Posterior cingulate gyrus (tissue), 11 donors: ENCODE measurements at regions of chr1 and their contacts with region 1.

Region 1: DNA sequence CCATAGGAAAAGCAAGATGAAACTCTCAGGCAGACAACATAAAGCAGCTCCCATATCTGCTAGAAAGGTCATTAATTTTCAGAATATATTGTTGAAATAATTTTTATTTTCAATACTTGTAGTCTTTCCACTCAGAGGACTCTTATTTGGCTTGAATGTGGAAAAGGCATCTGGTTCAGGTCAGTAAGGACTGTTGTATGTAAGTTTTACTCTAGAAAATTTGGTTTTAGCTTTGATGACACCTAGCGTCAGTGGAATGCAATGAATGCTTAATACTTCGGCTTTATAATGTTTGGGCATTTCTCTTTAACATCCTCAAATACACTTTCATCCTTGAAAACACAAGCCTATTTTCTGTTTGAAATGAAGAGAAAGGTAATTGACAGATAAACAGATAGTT is 63.3 kb downstream of the LRRC40 start:
- DNase-seq: no peak

Region 2: DNA sequence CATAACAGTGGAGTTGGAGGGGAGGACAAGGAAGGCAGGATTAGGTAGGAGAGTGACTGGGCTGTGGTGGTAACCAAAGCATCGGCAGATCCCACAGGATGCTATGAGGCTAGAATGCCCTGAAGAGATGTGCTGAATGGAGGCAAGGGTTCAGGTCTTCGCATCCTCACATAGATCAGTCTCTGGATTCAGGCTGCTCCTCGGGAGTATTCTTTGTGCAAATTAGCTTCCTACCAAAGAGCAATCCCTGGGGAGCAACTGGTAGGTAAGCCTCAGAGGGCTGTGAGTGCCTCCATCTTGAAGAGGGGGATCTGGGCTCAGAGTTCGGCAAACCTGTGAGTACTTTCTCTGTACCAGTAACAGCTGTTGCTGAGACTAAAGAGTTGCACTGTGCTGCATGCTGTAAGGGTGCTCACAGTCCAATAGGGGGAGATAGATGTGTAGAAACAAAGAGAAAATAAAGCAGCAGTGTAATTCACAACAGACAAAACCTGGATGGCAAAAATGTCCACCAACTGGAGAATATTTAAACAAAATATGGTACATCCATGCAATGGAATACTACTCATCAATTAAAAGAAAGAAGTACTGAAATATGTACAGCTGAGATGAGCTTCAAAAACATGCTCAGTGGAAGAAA is 1322.8 kb before region 1 on chr1:
- intact Hi-C with region 1: loop called (anchors 10 kb)
- DNase-seq: peak in 1 of 10 donors; percentile 38

Region 3: DNA sequence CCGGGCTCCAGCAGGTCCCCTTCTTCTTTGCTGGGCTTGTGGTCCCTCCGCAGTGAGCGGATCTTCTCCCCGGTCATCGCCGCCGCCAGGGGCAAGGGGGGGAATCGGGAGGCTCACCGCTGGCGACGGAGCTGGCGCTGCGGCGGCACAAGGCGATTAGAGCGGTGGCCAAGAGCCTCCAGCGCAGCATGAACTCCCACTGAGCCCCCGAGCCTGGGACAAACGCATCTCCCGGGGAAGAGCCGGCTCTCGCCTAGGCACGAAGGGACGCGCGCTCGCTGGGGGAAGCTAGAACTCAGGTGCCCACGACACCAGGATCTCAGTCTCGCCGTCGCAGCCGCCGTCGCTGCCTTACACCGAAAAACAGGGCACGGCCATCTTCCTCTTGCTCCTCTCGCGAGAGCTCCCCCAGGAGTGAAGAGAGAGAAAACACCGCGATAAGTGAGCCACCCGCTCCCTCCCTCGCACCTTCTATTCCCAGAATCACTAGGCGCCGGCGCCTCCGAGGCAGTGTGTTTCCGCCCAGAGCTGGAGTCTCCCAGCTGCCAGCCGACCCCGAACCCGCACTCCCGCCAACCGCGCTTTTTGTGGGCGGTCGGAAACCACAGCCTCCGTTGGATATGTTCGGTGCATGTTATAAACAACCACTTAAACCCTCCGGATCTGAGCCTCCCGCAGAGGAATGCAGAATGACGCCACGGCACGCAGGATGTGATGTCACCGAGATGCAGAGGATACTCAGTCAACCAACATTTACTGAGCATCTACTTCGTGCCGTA is 212.4 kb after region 1 on chr1 and contains the start of gene ANKRD13C:
- intact Hi-C with region 1: no loop called
- DNase-seq: peak; percentile 85 to 99 (median 92)